Ovary (tissue), 10 donors: ENCODE measurements at regions of chr13 and their contacts with region 1.

Region 1: GRCh38 chr13:106846571-106847448 is 278.9 kb upstream of the ARGLU1 start:
- DNase-seq: no peak
- H3K4me3 ChIP-seq: no peak overlapping the region
- H3K27ac ChIP-seq: no peak overlapping the region
- H3K4me1 ChIP-seq: no peaks in the 10 kb centered on the region
- H3K27me3 ChIP-seq: no peaks in the 10 kb centered on the region
- CTCF ChIP-seq: no peak
- EP300 ChIP-seq: no peak
- POLR2A ChIP-seq: no peak

Region 2: GRCh38 chr13:105969761-105970160 is 877.0 kb before region 1 on chr13:
- intact Hi-C with region 1: loop called in 1 of 4 experiments (anchors 5 kb)
- DNase-seq: no peak
- H3K4me3 ChIP-seq: no peak overlapping the region
- H3K27ac ChIP-seq: no peak overlapping the region
- H3K4me1 ChIP-seq: no peaks in the 10 kb centered on the region
- H3K27me3 ChIP-seq: no peaks in the 10 kb centered on the region
- CTCF ChIP-seq: no peak
- EP300 ChIP-seq: no peak
- POLR2A ChIP-seq: no peak

Region 3: GRCh38 chr13:107351308-107351707 is 504.5 kb after region 1 on chr13:
- intact Hi-C with region 1: no loop called
- DNase-seq: no peak
- H3K4me3 ChIP-seq: no peak overlapping the region
- H3K27ac ChIP-seq: no peak overlapping the region
- H3K4me1 ChIP-seq: no peaks in the 10 kb centered on the region
- H3K27me3 ChIP-seq: no peaks in the 10 kb centered on the region
- CTCF ChIP-seq: no peak
- EP300 ChIP-seq: no peak
- POLR2A ChIP-seq: no peak

Region 4: GRCh38 chr13:107713314-107713713 is 866.5 kb after region 1 on chr13:
- intact Hi-C with region 1: no loop called
- DNase-seq: no peak
- H3K4me3 ChIP-seq: no peak overlapping the region
- H3K27ac ChIP-seq: no peak overlapping the region
- H3K4me1 ChIP-seq: no peaks in the 10 kb centered on the region
- H3K27me3 ChIP-seq: no peaks in the 10 kb centered on the region
- CTCF ChIP-seq: no peak
- EP300 ChIP-seq: no peak
- POLR2A ChIP-seq: no peak